ENCODE measurements at regions of chr1 and their contacts with region 1.

Region 1: DNA sequence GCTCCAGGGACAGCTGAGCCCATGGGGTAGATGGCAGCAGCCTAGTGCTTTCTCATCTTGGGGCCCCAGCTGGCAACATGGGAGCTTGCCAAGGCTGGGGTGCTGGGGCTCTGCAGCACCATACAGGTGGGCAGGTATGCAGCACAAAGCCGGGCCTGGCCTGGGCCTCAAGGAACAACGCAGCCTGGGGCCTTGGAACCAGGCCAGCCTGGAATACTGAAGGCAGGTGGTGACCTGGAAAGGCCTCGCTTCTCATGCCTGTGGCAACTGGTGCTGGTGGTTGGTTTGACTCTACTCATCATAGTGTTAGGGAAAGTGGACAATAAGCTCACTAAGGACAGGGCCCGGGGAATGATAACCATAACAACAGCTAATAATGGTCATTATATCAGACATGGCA is 27.0 kb upstream of the SDHB start:
- DNase-seq: no peak
- H3K4me3 ChIP-seq: no peak overlapping the region
- H3K27ac ChIP-seq: no peak overlapping the region
- H3K4me1 ChIP-seq: no peaks in the 10 kb centered on the region
- H3K27me3 ChIP-seq: no peaks in the 10 kb centered on the region
- CTCF ChIP-seq: no peak
- EP300 ChIP-seq: no peak
- POLR2A ChIP-seq: no peak
- RAD21 ChIP-seq: no peak

Region 2: GRCh38 chr1:17066361-17067068 is 14.4 kb before region 1 on chr1:
- CTCF ChIA-PET with region 1: interaction called, 27 read pairs
- POLR2A ChIA-PET with region 1: no interaction called
- DNase-seq: no peak
- H3K4me3 ChIP-seq: no peak overlapping the region
- H3K27ac ChIP-seq: no peak overlapping the region
- H3K4me1 ChIP-seq: no peaks in the 10 kb centered on the region
- H3K27me3 ChIP-seq: no peaks in the 10 kb centered on the region
- CTCF ChIP-seq: no peak
- EP300 ChIP-seq: no peak
- POLR2A ChIP-seq: no peak
- RAD21 ChIP-seq: no peak

Measured in H1 (cell line).